CD4-positive, alpha-beta T cell (primary cell): ENCODE measurements at regions of chr5 and their contacts with region 1.

Region 1: GRCh38 chr5:139517683-139518564 is 35.4 kb upstream of the STING1 start:
- DNase-seq: peak; percentile 72 to 95 (median 88)
- ATAC-seq: peak; percentile 92
- H3K4me3 ChIP-seq: peak overlapping the region; percentile 66
- H3K4me3 Mint-ChIP-seq: peak overlapping the region; percentile 88
- H3K27ac ChIP-seq: peak overlapping the region; percentile 64 to 66
- H3K27ac Mint-ChIP-seq: peak overlapping the region; percentile 87
- H3K4me1 ChIP-seq: peaks cover 22% of the 10 kb centered on the region
- H3K4me1 Mint-ChIP-seq: peaks cover 27% of the 10 kb centered on the region
- H3K27me3 ChIP-seq: no peaks in the 10 kb centered on the region
- H3K27me3 Mint-ChIP-seq: no peaks in the 10 kb centered on the region
- CTCF ChIP-seq: peak; percentile 95

Region 2: DNA sequence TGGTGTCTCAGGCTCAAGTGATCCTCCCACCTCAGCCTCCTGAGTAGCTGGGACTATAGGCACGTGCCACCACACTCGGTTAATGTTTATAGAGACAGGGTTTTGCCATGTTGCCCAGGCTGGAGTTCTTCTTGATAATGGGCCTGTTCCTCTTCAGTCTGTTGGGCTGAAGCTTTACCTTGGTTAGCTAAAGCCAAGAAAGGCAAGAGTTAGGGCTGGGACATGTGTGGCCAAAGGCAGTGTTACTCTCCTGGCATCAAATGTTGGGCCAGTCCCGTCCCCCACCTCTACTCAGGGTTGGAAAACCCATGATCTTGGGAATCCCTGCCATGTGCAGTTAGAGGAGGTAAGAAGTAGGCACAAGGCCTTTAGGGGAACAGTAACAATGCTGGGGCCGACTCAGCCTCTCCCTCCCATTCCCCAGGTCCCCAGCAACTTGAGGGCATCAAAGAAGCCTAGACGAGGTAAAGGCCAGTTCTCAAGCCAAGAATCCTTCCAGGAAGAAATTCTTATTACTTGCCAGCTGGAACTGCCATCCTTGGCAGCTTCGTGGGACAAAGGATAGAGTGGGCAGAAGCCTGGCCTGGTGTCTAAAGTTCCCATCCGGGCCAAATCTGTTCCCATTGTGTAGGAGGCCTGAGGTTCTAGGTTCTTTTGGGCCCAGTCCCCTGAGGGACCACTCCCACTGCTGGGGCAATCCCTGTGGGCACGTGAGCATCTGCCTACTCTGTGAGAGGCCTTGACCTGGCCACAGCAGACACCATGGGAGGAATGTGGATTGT is 1048.2 kb before region 1 on chr5:
- CTCF ChIA-PET with region 1: no interaction called
- POLR2A ChIA-PET with region 1: no interaction called
- intact Hi-C with region 1: no loop called
- DNase-seq: peak in 1 of 14 experiments; percentile 57
- ATAC-seq: no peak
- H3K4me3 ChIP-seq: no peak overlapping the region
- H3K4me3 Mint-ChIP-seq: no peak overlapping the region
- H3K27ac ChIP-seq: no peak overlapping the region
- H3K27ac Mint-ChIP-seq: no peak overlapping the region
- H3K4me1 ChIP-seq: peaks cover 28% of the 10 kb centered on the region
- H3K4me1 Mint-ChIP-seq: peaks cover 26% of the 10 kb centered on the region
- H3K27me3 ChIP-seq: no peaks in the 10 kb centered on the region
- H3K27me3 Mint-ChIP-seq: no peaks in the 10 kb centered on the region
- CTCF ChIP-seq: no peak

Region 3: GRCh38 chr5:139439013-139439903 is 78.7 kb before region 1 on chr5 and contains the start of gene DNAJC18:
- CTCF ChIA-PET with region 1: interaction called, 16 read pairs
- POLR2A ChIA-PET with region 1: interaction called, 11 read pairs
- intact Hi-C with region 1: no loop called
- DNase-seq: peak; percentile 79 to 94 (median 88)
- ATAC-seq: peak; percentile 81
- H3K4me3 ChIP-seq: peak within 1 kb of the TSS; percentile 89
- H3K4me3 Mint-ChIP-seq: peak within 1 kb of the TSS; percentile 98
- H3K27ac ChIP-seq: peak within 1 kb of the TSS; percentile 95 to 99
- H3K27ac Mint-ChIP-seq: peak within 1 kb of the TSS; percentile 96
- H3K4me1 ChIP-seq: peaks cover 31% of the 10 kb centered on the region
- H3K4me1 Mint-ChIP-seq: peaks cover 51% of the 10 kb centered on the region
- H3K27me3 ChIP-seq: no peaks in the 10 kb centered on the region
- H3K27me3 Mint-ChIP-seq: no peaks in the 10 kb centered on the region
- CTCF ChIP-seq: no peak
- total RNA-seq, gene DNAJC18: 7.5 to 8.7 TPM

Region 4: GRCh38 chr5:139482050-139482889 is 35.7 kb before region 1 on chr5 and contains the start of gene STING1:
- CTCF ChIA-PET with region 1: interaction called, 15 read pairs
- POLR2A ChIA-PET with region 1: interaction called, 43 read pairs
- intact Hi-C with region 1: loop called in 1 of 2 experiments (anchors 2 kb)
- DNase-seq: peak; percentile 40 to 88 (median 60)
- ATAC-seq: peak; percentile 71
- H3K4me3 ChIP-seq: peak within 1 kb of the TSS; percentile 81
- H3K4me3 Mint-ChIP-seq: peak within 1 kb of the TSS; percentile 91
- H3K27ac ChIP-seq: peak within 1 kb of the TSS; percentile 82
- H3K27ac Mint-ChIP-seq: peak within 1 kb of the TSS; percentile 92
- H3K4me1 ChIP-seq: peaks cover 57% of the 10 kb centered on the region
- H3K4me1 Mint-ChIP-seq: peaks cover 37% of the 10 kb centered on the region
- H3K27me3 ChIP-seq: no peaks in the 10 kb centered on the region
- H3K27me3 Mint-ChIP-seq: no peaks in the 10 kb centered on the region
- CTCF ChIP-seq: no peak
- total RNA-seq, gene STING1: 155 to 168 TPM

Region 5: DNA sequence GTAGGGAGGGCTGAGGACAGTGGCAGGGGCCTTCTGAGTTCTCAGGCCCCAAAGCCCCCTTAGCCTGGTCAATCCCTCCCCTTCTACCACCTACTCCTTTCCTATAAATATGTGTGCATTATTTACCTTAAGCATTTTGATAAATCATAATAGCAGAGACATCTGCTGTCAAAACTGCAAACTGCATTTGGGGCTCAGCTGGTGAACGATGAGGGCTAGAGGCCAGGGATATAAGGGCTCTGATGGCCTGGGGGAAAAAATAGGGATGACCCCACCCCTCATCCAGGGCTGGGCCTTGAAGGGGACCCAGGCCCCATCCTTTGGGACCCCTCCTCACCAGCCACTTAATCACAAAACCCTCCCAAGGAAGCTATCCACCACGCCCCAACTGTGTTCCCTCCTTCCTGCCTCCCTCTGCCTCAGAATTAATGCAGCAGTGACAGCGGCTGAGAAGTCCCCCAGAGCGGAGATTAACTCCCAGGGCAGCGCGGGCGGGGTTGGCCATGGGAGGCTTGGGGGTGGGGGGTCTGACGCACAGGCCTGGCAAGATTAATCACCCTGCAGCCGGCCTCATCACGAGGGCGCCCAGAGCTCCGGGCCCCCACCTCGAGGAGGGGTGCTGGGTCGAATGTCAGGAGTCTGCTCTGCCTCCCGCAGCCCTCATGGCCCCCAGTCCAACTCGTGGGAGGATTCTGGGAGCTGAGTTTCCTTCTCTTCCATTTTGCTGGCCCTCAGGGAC is 172.3 kb after region 1 on chr5:
- CTCF ChIA-PET with region 1: no interaction called
- POLR2A ChIA-PET with region 1: no interaction called
- intact Hi-C with region 1: loop called (anchors 2 to 10 kb)
- DNase-seq: peak in 4 of 14 experiments; percentile 37 to 54 (median 46)
- ATAC-seq: peak; percentile 51
- H3K4me3 ChIP-seq: no peak overlapping the region
- H3K4me3 Mint-ChIP-seq: no peak overlapping the region
- H3K27ac ChIP-seq: no peak overlapping the region
- H3K27ac Mint-ChIP-seq: no peak overlapping the region
- H3K4me1 ChIP-seq: peaks cover 2% of the 10 kb centered on the region
- H3K4me1 Mint-ChIP-seq: no peaks in the 10 kb centered on the region
- H3K27me3 ChIP-seq: no peaks in the 10 kb centered on the region
- H3K27me3 Mint-ChIP-seq: no peaks in the 10 kb centered on the region
- CTCF ChIP-seq: peak; percentile 34

Region 6: GRCh38 chr5:139725073-139725830 is 207.3 kb after region 1 on chr5:
- CTCF ChIA-PET with region 1: no interaction called
- POLR2A ChIA-PET with region 1: no interaction called
- intact Hi-C with region 1: no loop called
- DNase-seq: peak in 1 of 14 experiments; percentile 4
- ATAC-seq: no peak
- H3K4me3 ChIP-seq: no peak overlapping the region
- H3K4me3 Mint-ChIP-seq: no peak overlapping the region
- H3K27ac ChIP-seq: no peak overlapping the region
- H3K27ac Mint-ChIP-seq: no peak overlapping the region
- H3K4me1 ChIP-seq: no peaks in the 10 kb centered on the region
- H3K4me1 Mint-ChIP-seq: no peaks in the 10 kb centered on the region
- H3K27me3 ChIP-seq: no peaks in the 10 kb centered on the region
- H3K27me3 Mint-ChIP-seq: no peaks in the 10 kb centered on the region
- CTCF ChIP-seq: no peak

Region 7: GRCh38 chr5:139765409-139766217 is 247.7 kb after region 1 on chr5:
- CTCF ChIA-PET with region 1: interaction called, 4 read pairs
- POLR2A ChIA-PET with region 1: no interaction called
- intact Hi-C with region 1: loop called in 1 of 2 experiments (anchors 2 kb)
- DNase-seq: peak; percentile 71 to 92 (median 78)
- ATAC-seq: peak; percentile 92
- H3K4me3 ChIP-seq: peak overlapping the region; percentile 60
- H3K4me3 Mint-ChIP-seq: peak overlapping the region; percentile 48
- H3K27ac ChIP-seq: no peak overlapping the region
- H3K27ac Mint-ChIP-seq: no peak overlapping the region
- H3K4me1 ChIP-seq: peaks cover 19% of the 10 kb centered on the region
- H3K4me1 Mint-ChIP-seq: peaks cover 9% of the 10 kb centered on the region
- H3K27me3 ChIP-seq: peaks cover 29 to 30% of the 10 kb centered on the region in 2 experiments
- H3K27me3 Mint-ChIP-seq: peaks cover 50% of the 10 kb centered on the region
- CTCF ChIP-seq: peak; percentile 100